ENCODE measurements at regions of chr7 and their contacts with region 1.

Region 1: GRCh38 chr7:73496626-73497025 is 25.5 kb downstream of the BAZ1B start:
- DNase-seq: no peak
- ATAC-seq: no peak
- H3K4me3 ChIP-seq: no peak overlapping the region
- H3K27ac ChIP-seq: no peak overlapping the region
- H3K4me1 ChIP-seq: no peaks in the 10 kb centered on the region
- H3K27me3 ChIP-seq: no peaks in the 10 kb centered on the region
- CTCF ChIP-seq: no peak
- EP300 ChIP-seq: no peak
- POLR2A ChIP-seq: no peak
- RAD21 ChIP-seq: no peak

Region 2: GRCh38 chr7:72793791-72794190 is 702.8 kb before region 1 on chr7:
- CTCF ChIA-PET with region 1: no interaction called
- POLR2A ChIA-PET with region 1: no interaction called
- in situ Hi-C with region 1: no loop called
- intact Hi-C with region 1: no loop called
- DNase-seq: no peak
- ATAC-seq: no peak
- H3K4me3 ChIP-seq: no peak overlapping the region
- H3K27ac ChIP-seq: no peak overlapping the region
- H3K4me1 ChIP-seq: no peaks in the 10 kb centered on the region
- H3K27me3 ChIP-seq: no peaks in the 10 kb centered on the region
- CTCF ChIP-seq: no peak
- EP300 ChIP-seq: no peak
- POLR2A ChIP-seq: no peak
- RAD21 ChIP-seq: no peak

Region 3: GRCh38 chr7:73463966-73464365 is 32.7 kb before region 1 on chr7:
- CTCF ChIA-PET with region 1: no interaction called
- POLR2A ChIA-PET with region 1: no interaction called
- in situ Hi-C with region 1: loop called (anchors 5 kb)
- intact Hi-C with region 1: no loop called
- DNase-seq: no peak
- ATAC-seq: no peak
- H3K4me3 ChIP-seq: no peak overlapping the region
- H3K27ac ChIP-seq: no peak overlapping the region
- H3K4me1 ChIP-seq: no peaks in the 10 kb centered on the region
- H3K27me3 ChIP-seq: no peaks in the 10 kb centered on the region
- CTCF ChIP-seq: no peak
- EP300 ChIP-seq: no peak
- POLR2A ChIP-seq: no peak
- RAD21 ChIP-seq: no peak

Measured in HepG2 (cell line).